ENCODE measurements at regions of chr5 and their contacts with region 1.

Region 1: GRCh38 chr5:112239996-112240395 is 179.1 kb downstream of the EPB41L4A start:
- DNase-seq: peak; percentile 41 to 47
- H3K4me3 ChIP-seq: no peak overlapping the region
- H3K4me3 Mint-ChIP-seq: no peak overlapping the region
- H3K27ac Mint-ChIP-seq: no peak overlapping the region
- H3K4me1 ChIP-seq: no peaks in the 10 kb centered on the region
- H3K4me1 Mint-ChIP-seq: peaks cover 6% of the 10 kb centered on the region
- H3K27me3 ChIP-seq: no peaks in the 10 kb centered on the region
- H3K27me3 Mint-ChIP-seq: peaks cover 3% of the 10 kb centered on the region
- CTCF ChIP-seq: peak in 1 of 2 experiments; percentile 39

Region 2: GRCh38 chr5:112228667-112229066 is 11.3 kb before region 1 on chr5:
- CTCF ChIA-PET with region 1: no interaction called
- POLR2A ChIA-PET with region 1: no interaction called
- intact Hi-C with region 1: loop called (anchors 1 kb)
- DNase-seq: peak; percentile 69 to 76
- H3K4me3 ChIP-seq: no peak overlapping the region
- H3K4me3 Mint-ChIP-seq: peak overlapping the region; percentile 56
- H3K27ac Mint-ChIP-seq: peak overlapping the region; percentile 76
- H3K4me1 ChIP-seq: peaks cover 23% of the 10 kb centered on the region
- H3K4me1 Mint-ChIP-seq: no peaks in the 10 kb centered on the region
- H3K27me3 ChIP-seq: no peaks in the 10 kb centered on the region; the same call in 1 of the 2 replicates
- H3K27me3 Mint-ChIP-seq: no peaks in the 10 kb centered on the region
- CTCF ChIP-seq: no peak